Ovary (tissue), 10 donors: ENCODE measurements at regions of chr20 and their contacts with region 1.

Region 1: DNA sequence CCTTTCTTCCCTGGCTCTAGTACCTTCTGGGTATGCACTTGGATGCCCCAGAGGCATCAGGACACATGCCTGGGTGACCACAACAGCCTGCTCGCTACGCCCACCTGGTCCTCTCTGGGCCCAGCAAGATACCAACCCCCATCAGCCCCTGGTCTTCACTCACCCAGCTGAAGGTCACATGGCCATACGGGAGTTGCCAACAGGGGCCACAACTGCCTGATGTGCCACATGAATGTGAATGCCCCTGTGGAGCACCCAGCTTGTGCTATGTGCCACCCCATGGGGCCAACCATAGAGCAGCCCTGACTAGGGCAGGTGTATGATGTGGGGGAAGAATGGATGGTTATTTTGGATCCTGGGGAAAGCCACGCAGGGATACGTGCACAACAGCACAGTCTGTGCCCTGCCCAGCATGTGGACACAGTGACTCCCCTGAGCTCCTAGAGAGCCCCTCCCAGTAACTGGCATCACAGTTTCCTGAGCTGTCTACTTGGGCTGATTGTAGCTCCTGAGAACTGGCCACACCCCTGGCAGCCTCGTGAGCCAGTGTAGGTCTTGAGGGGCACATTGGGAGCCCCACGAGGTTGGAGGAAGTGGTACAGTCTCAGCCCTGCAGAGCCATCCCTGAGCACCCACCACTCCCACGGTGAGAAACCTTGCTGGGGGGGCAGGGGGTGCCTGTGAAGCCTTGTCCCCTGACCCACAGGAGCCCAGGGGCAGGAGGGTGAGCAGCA is 10.5 kb upstream of the PCMTD2 start:
- DNase-seq: peak in 2 of 5 donors; percentile 5 to 9
- H3K4me3 ChIP-seq: no peak overlapping the region
- H3K27ac ChIP-seq: no peak overlapping the region
- H3K4me1 ChIP-seq: no peaks in the 10 kb centered on the region
- H3K27me3 ChIP-seq: no peaks in the 10 kb centered on the region
- CTCF ChIP-seq: no peak
- EP300 ChIP-seq: no peak
- POLR2A ChIP-seq: no peak

Region 2: GRCh38 chr20:63116412-63117099 is 1128.5 kb before region 1 on chr20:
- intact Hi-C with region 1: loop called in 1 of 4 experiments (anchors 5 kb)
- DNase-seq: peak in 1 of 5 donors; percentile 46
- H3K4me3 ChIP-seq: no peak overlapping the region
- H3K27ac ChIP-seq: no peak overlapping the region
- H3K4me1 ChIP-seq: no peaks in the 10 kb centered on the region
- H3K27me3 ChIP-seq: no peaks in the 10 kb centered on the region
- CTCF ChIP-seq: no peak
- EP300 ChIP-seq: no peak
- POLR2A ChIP-seq: no peak